HepG2 (cell line): ENCODE measurements at regions of chr18 and their contacts with region 1.

Region 1: DNA sequence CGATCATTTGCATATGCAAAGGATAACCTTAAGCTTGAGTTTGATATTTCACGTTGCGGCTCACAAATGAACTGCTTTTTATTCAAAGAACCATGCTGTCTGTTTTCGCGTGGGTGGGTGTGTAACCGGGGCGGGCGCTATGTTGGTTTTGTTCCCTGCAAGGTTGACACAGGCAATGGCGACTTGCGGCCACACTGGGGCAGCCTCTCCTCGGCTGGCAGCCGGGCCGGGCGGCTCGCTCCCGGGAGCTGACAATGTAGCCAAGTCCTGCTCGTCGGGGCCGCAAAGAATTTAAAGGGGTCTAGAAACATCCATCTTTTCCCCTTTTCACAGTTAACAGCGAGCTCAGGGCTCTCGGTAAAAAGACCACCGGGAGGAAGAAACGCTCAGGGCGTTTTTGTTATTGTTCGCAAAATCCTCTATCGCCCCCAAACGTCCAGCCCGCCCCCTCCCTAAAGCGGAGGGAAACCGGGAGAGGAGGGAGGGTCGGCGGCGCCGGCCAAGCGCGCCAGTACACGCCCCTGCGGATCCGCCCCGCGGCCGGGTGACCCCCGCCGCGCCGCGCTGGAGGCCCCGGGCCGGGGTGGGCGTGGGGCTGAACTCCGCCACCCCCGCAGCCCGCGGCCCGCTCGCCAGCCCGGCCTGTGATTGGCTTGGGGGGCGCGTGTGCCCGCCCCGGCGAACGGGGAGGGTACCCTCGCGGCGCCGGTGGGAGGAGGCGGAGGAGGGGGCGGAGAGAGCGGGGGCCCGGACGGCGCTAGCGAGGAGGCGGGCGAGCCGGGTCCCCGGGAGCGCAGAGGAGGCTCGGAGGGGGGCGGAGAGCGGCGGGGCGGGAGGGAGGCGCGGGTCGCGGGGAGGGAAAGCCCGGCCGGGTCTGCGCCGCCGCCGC is at the start of gene NEDD4L:
- DNase-seq: peak; percentile 82
- ATAC-seq: peak; percentile 87
- H3K4me3 ChIP-seq: peak within 1 kb of the TSS; percentile 87 to 96 (median 90)
- H3K27ac ChIP-seq: peak within 1 kb of the TSS; percentile 83
- H3K4me1 ChIP-seq: peaks cover 39% of the 10 kb centered on the region
- H3K27me3 ChIP-seq: no peaks in the 10 kb centered on the region; a peak in 1 of 5 replicates
- CTCF ChIP-seq: peak; percentile 94
- EP300 ChIP-seq: peak in 1 of 2 experiments; percentile 36; a peak in 2 of 4 replicates
- POLR2A ChIP-seq: peak in 1 of 2 experiments; percentile 22; a peak in 2 of 4 replicates
- RAD21 ChIP-seq: peak; percentile 94
- total RNA-seq, gene NEDD4L: 155 and 168 TPM in 2 replicates

Region 2: DNA sequence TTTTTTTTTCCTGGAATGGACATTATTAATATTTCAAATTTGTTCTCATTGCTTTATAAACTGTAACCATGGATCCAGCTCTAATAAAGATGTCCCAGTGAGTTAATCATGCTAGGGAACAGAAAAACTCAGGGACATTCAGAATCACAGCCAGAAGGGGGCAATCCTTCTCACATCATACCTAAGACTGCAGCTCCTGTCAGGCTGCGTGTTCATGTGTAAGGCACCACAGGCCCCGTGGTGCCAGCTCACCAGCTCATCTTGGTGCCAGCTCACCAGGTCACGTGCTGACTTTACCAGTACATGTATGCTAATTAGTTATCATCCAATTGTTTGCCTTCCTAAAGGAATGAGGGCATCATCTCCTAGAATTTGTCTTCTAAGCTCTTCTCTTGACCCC is 84.5 kb before region 1 on chr18:
- CTCF ChIA-PET with region 1: interaction called, 7 read pairs
- POLR2A ChIA-PET with region 1: interaction called, 3 read pairs
- in situ Hi-C with region 1: no loop called
- intact Hi-C with region 1: loop called (anchors 1 kb)
- DNase-seq: peak; percentile 66
- ATAC-seq: peak; percentile 96
- H3K4me3 ChIP-seq: no peak overlapping the region; a peak in 1 of 6 replicates
- H3K27ac ChIP-seq: no peak overlapping the region
- H3K4me1 ChIP-seq: peaks cover 30% of the 10 kb centered on the region
- H3K27me3 ChIP-seq: no peaks in the 10 kb centered on the region
- CTCF ChIP-seq: peak; percentile 83
- EP300 ChIP-seq: no peak
- POLR2A ChIP-seq: no peak
- RAD21 ChIP-seq: peak; percentile 62; the same call in 1 of the 2 replicates

Region 3: DNA sequence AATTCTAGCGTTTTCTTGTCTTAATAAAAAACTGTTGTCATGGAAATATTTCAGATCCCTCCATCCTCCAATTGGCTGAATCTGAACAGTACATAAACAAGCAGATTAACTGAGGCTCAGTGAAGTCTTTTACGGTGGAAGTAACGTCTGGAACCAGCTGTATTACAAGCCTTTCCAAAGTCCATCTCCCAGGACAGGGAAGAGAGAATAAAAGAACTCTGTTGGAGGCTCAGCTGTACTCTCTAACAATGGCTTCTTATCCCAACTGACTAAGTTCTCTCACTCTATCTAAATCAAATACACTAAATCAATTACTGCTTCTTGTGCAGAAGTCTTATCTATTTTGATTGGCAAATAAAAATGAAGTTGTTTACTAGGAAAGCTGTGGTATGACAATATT is 19.6 kb before region 1 on chr18:
- CTCF ChIA-PET with region 1: no interaction called
- POLR2A ChIA-PET with region 1: interaction called, 4 read pairs
- in situ Hi-C with region 1: no loop called
- intact Hi-C with region 1: loop called (anchors 1 kb)
- DNase-seq: peak; percentile 94
- ATAC-seq: peak; percentile 93
- H3K4me3 ChIP-seq: no peak overlapping the region
- H3K27ac ChIP-seq: peak overlapping the region; percentile 61
- H3K4me1 ChIP-seq: peaks cover 96% of the 10 kb centered on the region
- H3K27me3 ChIP-seq: no peaks in the 10 kb centered on the region
- CTCF ChIP-seq: no peak
- EP300 ChIP-seq: peak in 1 of 2 experiments; percentile 71; a peak in 1 of 4 replicates
- POLR2A ChIP-seq: no peak
- RAD21 ChIP-seq: no peak

Region 4: GRCh38 chr18:58076052-58076451 is 32.3 kb after region 1 on chr18:
- CTCF ChIA-PET with region 1: no interaction called
- POLR2A ChIA-PET with region 1: no interaction called
- in situ Hi-C with region 1: no loop called
- intact Hi-C with region 1: no loop called
- DNase-seq: no peak
- ATAC-seq: no peak
- H3K4me3 ChIP-seq: no peak overlapping the region
- H3K27ac ChIP-seq: no peak overlapping the region
- H3K4me1 ChIP-seq: peaks cover 15% of the 10 kb centered on the region
- H3K27me3 ChIP-seq: no peaks in the 10 kb centered on the region
- CTCF ChIP-seq: no peak
- EP300 ChIP-seq: no peak
- POLR2A ChIP-seq: no peak
- RAD21 ChIP-seq: no peak

Region 5: GRCh38 chr18:58180738-58181353 is 137.1 kb after region 1 on chr18:
- CTCF ChIA-PET with region 1: interaction called, 5 read pairs
- POLR2A ChIA-PET with region 1: no interaction called
- in situ Hi-C with region 1: no loop called
- intact Hi-C with region 1: loop called (anchors 1 kb)
- DNase-seq: peak; percentile 37
- ATAC-seq: no peak; the same call in 2 of the 3 replicates
- H3K4me3 ChIP-seq: no peak overlapping the region
- H3K27ac ChIP-seq: no peak overlapping the region
- H3K4me1 ChIP-seq: peaks cover 25% of the 10 kb centered on the region
- H3K27me3 ChIP-seq: no peaks in the 10 kb centered on the region
- CTCF ChIP-seq: peak; percentile 68
- EP300 ChIP-seq: no peak
- POLR2A ChIP-seq: no peak
- RAD21 ChIP-seq: no peak

Region 6: DNA sequence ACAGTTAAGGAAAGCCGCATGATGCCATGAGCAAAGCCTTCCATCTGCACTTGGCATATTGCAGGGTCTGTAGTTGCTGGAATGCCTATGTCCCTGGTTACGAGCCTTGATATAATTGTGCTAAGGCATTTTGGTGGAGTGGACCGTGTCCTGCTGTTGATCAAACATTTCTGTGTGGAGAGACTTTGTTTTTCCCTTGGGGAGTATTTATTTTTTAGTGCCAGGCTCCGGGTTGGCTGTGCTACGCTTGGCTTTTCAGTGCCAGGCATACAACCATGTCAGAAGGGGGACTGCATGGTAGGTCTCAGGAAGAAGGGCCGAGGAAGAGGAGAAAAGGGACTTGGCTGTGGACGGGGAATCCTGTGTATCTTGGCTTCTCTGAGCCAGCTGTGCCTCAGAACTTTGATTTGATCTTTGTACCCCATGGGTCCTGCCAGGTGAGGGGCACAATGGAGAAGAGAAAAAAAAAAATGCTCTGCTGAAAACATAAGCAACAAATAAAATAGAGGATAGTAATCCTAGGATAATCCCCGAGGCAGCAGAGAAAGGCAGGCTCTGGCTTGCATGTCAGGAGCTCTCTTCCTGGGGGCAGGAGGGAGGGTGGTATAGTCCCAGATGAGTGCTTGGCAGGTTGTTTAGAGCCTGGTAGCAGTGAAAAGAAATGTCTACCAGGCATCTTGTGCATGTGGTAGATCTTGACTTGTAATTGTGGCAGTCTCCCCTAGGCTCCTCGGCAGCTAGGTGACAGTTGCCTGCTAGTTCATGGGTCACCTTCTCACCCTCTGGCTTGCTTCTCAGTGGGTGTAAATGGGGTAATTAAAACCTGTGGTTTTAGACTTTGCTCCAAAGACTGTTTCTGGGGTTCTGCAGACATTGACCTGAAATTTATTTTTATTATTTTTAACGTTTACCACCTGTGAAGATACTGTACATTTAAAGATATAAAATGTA is 233.3 kb after region 1 on chr18:
- CTCF ChIA-PET with region 1: no interaction called
- POLR2A ChIA-PET with region 1: no interaction called
- in situ Hi-C with region 1: no loop called
- intact Hi-C with region 1: no loop called
- DNase-seq: no peak
- ATAC-seq: no peak
- H3K4me3 ChIP-seq: no peak overlapping the region
- H3K27ac ChIP-seq: no peak overlapping the region
- H3K4me1 ChIP-seq: peaks cover 49% of the 10 kb centered on the region
- H3K27me3 ChIP-seq: no peaks in the 10 kb centered on the region
- CTCF ChIP-seq: no peak
- EP300 ChIP-seq: no peak
- POLR2A ChIP-seq: no peak
- RAD21 ChIP-seq: no peak

Region 7: GRCh38 chr18:58407649-58408407 is 364.1 kb after region 1 on chr18:
- CTCF ChIA-PET with region 1: no interaction called
- POLR2A ChIA-PET with region 1: interaction called, 12 read pairs
- in situ Hi-C with region 1: no loop called
- intact Hi-C with region 1: no loop called
- DNase-seq: peak; percentile 100
- ATAC-seq: peak; percentile 74
- H3K4me3 ChIP-seq: peak overlapping the region in 1 of 3 experiments; percentile 47; a peak in 1 of 6 replicates
- H3K27ac ChIP-seq: peak overlapping the region; percentile 98
- H3K4me1 ChIP-seq: peaks cover 99% of the 10 kb centered on the region
- H3K27me3 ChIP-seq: no peaks in the 10 kb centered on the region
- CTCF ChIP-seq: peak; percentile 59
- EP300 ChIP-seq: peak; percentile 95 to 100
- POLR2A ChIP-seq: peak in 1 of 2 experiments; percentile 51; a peak in 1 of 4 replicates
- RAD21 ChIP-seq: peak; percentile 66

Region 8: GRCh38 chr18:58605027-58606020 is 561.6 kb after region 1 on chr18:
- CTCF ChIA-PET with region 1: no interaction called
- POLR2A ChIA-PET with region 1: no interaction called
- in situ Hi-C with region 1: no loop called
- intact Hi-C with region 1: loop called (anchors 5 kb)
- DNase-seq: peak; percentile 99
- ATAC-seq: peak; percentile 92
- H3K4me3 ChIP-seq: no peak overlapping the region
- H3K27ac ChIP-seq: peak overlapping the region; percentile 45
- H3K4me1 ChIP-seq: peaks cover 78% of the 10 kb centered on the region
- H3K27me3 ChIP-seq: no peaks in the 10 kb centered on the region
- CTCF ChIP-seq: no peak
- EP300 ChIP-seq: peak in 1 of 2 experiments; percentile 95; a peak in 3 of 4 replicates
- POLR2A ChIP-seq: no peak
- RAD21 ChIP-seq: no peak